ENCODE measurements at regions of chr11 and their contacts with region 1.

Region 1: GRCh38 chr11:128630367-128631230 is 43.2 kb upstream of the ETS1 start:
- DNase-seq: peak; percentile 89
- H3K4me3 ChIP-seq: no peak overlapping the region
- H3K27ac ChIP-seq: peak overlapping the region; percentile 22
- H3K4me1 ChIP-seq: peaks cover 8% of the 10 kb centered on the region
- H3K27me3 ChIP-seq: no peaks in the 10 kb centered on the region
- CTCF ChIP-seq: peak; percentile 71 to 84
- POLR2A ChIP-seq: no peak

Region 2: GRCh38 chr11:128026596-128026995 is 604.0 kb before region 1 on chr11:
- CTCF ChIA-PET with region 1: interaction called, 6 read pairs
- POLR2A ChIA-PET with region 1: no interaction called
- dilution Hi-C with region 1: loop called (anchors 25 kb)
- intact Hi-C with region 1: loop called (anchors 1 kb)
- DNase-seq: peak; percentile 81
- H3K4me3 ChIP-seq: no peak overlapping the region
- H3K27ac ChIP-seq: peak overlapping the region; percentile 39
- H3K4me1 ChIP-seq: peaks cover 25% of the 10 kb centered on the region
- H3K27me3 ChIP-seq: no peaks in the 10 kb centered on the region
- CTCF ChIP-seq: no peak
- POLR2A ChIP-seq: no peak

Region 3: DNA sequence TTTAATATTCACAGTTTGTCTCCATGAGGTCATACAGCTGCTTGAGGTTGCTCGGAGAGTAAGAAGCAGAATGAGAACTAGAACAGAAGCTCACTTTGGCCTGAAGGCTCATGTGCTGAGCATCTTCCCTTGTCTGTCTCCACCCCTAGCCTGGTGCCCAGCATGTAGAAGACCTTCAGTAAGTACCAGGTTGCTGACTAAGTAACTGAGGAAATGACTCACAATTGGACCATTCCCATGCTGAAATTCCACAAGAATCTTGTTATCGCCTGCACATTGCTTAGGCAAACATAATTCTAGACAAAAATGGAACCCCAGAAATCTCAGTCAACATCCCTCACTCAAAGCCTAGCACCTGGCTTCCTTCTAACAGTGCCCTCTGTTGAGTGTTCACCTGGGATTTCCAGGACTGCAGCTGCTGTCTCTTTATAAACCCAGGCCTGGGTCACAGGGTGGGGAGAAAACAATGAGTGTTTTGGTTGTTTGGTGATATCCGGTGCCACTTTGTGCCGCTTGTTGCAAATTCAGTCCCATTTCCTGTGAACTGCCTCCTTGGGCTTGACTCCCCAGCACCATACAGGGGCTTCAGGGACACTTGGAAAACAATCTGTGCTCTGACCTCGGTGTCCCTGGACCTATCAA is 450.0 kb before region 1 on chr11:
- CTCF ChIA-PET with region 1: interaction called, 18 read pairs
- POLR2A ChIA-PET with region 1: no interaction called
- dilution Hi-C with region 1: no loop called
- intact Hi-C with region 1: loop called (anchors 2 kb)
- DNase-seq: peak; percentile 93
- H3K4me3 ChIP-seq: no peak overlapping the region
- H3K27ac ChIP-seq: peak overlapping the region; percentile 97
- H3K4me1 ChIP-seq: peaks cover 19% of the 10 kb centered on the region
- H3K27me3 ChIP-seq: no peaks in the 10 kb centered on the region
- CTCF ChIP-seq: no peak
- POLR2A ChIP-seq: no peak

Region 4: DNA sequence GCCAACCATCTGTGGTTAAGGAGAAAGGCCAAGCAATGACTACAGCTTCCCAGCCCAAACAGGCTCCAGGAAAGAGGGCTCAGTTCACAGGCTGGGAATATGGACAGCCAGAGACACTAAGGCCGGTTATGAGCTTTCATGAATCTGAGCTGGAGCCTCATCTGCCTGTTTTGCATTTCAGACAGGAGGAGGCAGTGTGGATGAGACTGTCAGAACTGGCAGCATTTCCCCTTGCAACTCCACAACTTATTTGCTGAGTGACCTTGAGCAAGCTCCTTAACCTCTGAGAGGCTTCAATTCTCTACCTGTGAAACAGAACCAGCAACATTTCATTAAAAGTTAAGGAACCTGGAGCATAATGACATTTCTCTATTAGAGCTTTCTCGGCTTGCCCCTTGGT is 307.2 kb before region 1 on chr11:
- CTCF ChIA-PET with region 1: interaction called, 7 read pairs
- POLR2A ChIA-PET with region 1: no interaction called
- dilution Hi-C with region 1: loop called (anchors 25 kb)
- intact Hi-C with region 1: no loop called
- DNase-seq: peak; percentile 23
- H3K4me3 ChIP-seq: no peak overlapping the region
- H3K27ac ChIP-seq: no peak overlapping the region
- H3K4me1 ChIP-seq: peaks cover 3% of the 10 kb centered on the region
- H3K27me3 ChIP-seq: no peaks in the 10 kb centered on the region
- CTCF ChIP-seq: peak in 1 of 2 donors; percentile 20
- POLR2A ChIP-seq: no peak

Region 5: DNA sequence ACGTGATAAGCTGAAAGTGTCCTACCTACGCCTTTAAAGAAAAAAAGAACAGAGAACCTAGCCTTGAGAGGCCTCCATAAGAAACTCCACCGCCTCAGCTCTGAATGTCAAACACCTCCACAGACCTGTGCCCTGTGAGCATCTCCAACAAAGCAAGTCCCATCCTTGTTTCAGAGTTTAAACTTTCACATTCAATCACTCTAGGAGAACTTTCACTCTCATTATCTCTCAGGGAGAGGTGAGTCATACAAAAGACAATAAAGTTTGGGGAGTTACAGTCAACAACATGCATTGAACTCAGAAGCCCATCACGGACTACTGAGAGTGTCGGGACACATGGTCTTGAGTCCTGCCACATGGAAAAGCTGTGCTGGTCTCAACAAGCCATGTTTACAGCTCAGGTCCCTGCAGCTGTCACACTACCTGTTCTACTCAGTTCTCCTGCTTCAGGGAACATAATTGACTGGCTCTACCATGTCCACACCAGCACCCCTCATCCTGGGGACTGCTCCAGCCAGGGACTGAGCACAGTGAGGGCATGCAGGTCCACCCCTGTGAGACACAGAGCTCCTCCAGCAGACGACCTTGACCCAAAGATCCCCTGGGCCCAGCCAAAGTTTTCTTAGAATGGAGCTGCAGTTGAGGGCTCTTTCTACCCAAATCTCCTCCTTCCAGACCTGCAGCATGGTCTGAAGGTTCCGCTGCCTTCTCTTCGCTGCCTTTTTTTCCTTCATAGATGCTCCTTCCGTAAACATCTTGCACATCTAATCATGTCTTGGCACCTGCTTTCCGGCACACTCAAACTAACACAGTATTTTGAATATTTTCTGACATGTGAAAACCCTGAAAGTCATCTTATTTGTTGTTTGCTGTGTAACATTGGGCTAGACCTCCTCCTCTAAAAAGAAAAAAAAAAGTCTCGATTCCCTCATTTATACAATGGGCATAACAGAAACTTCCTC is 158.2 kb before region 1 on chr11:
- CTCF ChIA-PET with region 1: interaction called, 5 read pairs
- POLR2A ChIA-PET with region 1: no interaction called
- dilution Hi-C with region 1: no loop called
- intact Hi-C with region 1: loop called (anchors 5 kb)
- DNase-seq: peak; percentile 45
- H3K4me3 ChIP-seq: no peak overlapping the region
- H3K27ac ChIP-seq: no peak overlapping the region
- H3K4me1 ChIP-seq: peaks cover 22% of the 10 kb centered on the region
- H3K27me3 ChIP-seq: no peaks in the 10 kb centered on the region
- CTCF ChIP-seq: no peak
- POLR2A ChIP-seq: no peak

Region 6: DNA sequence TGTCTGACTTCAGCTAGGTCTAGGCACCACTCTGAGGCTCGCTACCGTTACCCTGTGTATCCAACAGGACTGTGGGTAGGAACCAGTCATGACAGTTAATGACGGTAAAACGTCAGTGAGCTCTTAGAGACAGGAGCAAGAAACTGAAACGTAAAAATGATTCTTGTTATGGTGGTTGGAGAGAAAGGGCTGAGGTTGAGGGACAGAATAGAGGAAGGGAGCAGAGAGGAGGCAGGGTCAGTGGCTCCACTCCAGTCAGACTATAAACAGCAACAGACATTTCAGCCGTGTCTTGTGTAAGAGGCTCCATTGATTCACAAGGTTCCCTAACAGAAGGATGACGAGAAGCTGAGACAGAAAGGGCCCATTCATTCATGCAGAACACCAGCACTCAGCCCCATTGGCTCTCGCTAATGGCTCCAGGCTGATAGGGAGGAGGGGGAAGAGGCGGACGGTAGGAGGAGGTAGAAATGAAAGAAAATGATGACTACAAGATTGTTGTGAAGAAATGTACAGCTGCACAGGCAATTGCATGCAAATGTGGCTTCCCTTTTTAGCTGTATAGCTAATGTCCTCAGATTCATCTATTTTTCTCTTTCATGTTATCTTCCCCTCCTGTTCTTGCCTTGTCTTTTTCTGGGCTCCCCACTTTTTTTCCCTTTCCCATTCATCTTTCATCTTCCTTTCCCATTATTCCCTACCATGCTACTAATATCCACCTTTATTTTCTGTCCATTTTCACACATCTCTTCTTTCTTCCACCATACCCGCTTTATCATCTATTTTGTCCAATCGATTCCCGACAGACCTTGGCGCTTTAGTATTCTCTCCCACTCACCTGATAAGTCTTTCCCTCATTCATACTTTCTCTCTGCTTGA is 77.6 kb before region 1 on chr11:
- CTCF ChIA-PET with region 1: interaction called, 34 read pairs
- POLR2A ChIA-PET with region 1: no interaction called
- dilution Hi-C with region 1: no loop called
- intact Hi-C with region 1: loop called (anchors 1 kb)
- DNase-seq: no peak
- H3K4me3 ChIP-seq: no peak overlapping the region
- H3K27ac ChIP-seq: no peak overlapping the region
- H3K4me1 ChIP-seq: peaks cover 11% of the 10 kb centered on the region
- H3K27me3 ChIP-seq: peaks cover 4 to 6% of the 10 kb centered on the region in 2 experiments
- CTCF ChIP-seq: no peak
- POLR2A ChIP-seq: no peak

Region 7: DNA sequence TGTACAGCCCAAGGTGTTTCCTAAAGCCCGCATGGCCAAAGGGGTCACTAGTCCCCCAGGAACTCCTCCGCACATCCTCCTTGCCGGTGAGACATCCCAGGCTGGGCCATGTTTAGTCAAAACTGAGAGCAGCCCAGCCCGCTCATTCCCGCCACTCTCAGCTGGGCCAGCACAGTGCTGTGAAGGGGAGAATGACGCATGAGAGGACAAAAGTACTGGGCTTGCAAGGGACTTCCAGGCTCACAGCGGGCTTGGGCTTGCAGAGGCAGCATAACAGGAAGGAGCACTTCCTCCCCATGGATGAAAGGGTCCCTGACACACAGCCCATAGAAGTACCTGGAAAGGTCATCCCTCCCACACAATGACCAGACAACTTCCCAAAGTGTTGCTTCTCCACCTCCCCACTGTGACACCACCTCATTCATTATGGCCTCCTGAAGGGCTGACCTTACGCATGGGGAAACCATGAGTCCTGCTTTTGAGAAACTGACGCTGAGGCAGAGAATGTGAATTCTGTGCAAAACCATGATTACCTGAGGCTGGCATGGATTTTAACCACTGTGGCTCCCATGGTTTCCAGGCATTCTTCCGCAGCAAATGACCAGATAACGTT is 62.3 kb before region 1 on chr11:
- CTCF ChIA-PET with region 1: no interaction called
- POLR2A ChIA-PET with region 1: no interaction called
- dilution Hi-C with region 1: no loop called
- intact Hi-C with region 1: no loop called
- DNase-seq: no peak
- H3K4me3 ChIP-seq: no peak overlapping the region
- H3K27ac ChIP-seq: no peak overlapping the region
- H3K4me1 ChIP-seq: no peaks in the 10 kb centered on the region
- H3K27me3 ChIP-seq: no peaks in the 10 kb centered on the region
- CTCF ChIP-seq: no peak
- POLR2A ChIP-seq: no peak

Region 8: DNA sequence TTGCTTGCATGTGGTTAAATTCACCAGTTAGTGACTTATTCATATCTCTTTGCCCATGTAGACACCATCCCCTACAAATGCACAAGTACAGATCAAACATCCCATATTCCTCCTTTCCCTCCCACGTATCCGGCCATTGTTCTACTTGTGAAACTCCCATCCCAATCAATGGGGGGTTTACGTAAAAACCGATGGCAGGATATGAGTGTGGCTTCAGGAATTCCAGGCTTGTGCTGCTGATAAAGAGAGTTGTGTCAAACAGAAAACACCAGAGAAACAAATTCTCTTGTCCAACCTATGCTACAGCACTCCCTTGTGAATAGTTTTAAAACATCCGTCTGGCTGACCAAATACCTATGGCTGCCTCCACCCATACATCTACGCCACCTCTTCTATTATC is 78.8 kb after region 1 on chr11:
- CTCF ChIA-PET with region 1: interaction called, 4 read pairs
- POLR2A ChIA-PET with region 1: no interaction called
- dilution Hi-C with region 1: no loop called
- intact Hi-C with region 1: loop called (anchors 1 kb)
- DNase-seq: peak; percentile 99
- H3K4me3 ChIP-seq: no peak overlapping the region
- H3K27ac ChIP-seq: peak overlapping the region; percentile 97
- H3K4me1 ChIP-seq: peaks cover 88% of the 10 kb centered on the region
- H3K27me3 ChIP-seq: no peaks in the 10 kb centered on the region
- CTCF ChIP-seq: peak in 1 of 2 donors; percentile 5
- POLR2A ChIP-seq: peak; percentile 85

Region 9: GRCh38 chr11:128796270-128796669 is 165.7 kb after region 1 on chr11:
- CTCF ChIA-PET with region 1: no interaction called
- POLR2A ChIA-PET with region 1: no interaction called
- dilution Hi-C with region 1: no loop called
- intact Hi-C with region 1: no loop called
- DNase-seq: no peak
- H3K4me3 ChIP-seq: no peak overlapping the region
- H3K27ac ChIP-seq: no peak overlapping the region
- H3K4me1 ChIP-seq: no peaks in the 10 kb centered on the region
- H3K27me3 ChIP-seq: no peaks in the 10 kb centered on the region
- CTCF ChIP-seq: no peak
- POLR2A ChIP-seq: no peak